Sigmoid colon (tissue), 7 donors: ENCODE measurements at regions of chr7 and their contacts with region 1.

Region 1: DNA sequence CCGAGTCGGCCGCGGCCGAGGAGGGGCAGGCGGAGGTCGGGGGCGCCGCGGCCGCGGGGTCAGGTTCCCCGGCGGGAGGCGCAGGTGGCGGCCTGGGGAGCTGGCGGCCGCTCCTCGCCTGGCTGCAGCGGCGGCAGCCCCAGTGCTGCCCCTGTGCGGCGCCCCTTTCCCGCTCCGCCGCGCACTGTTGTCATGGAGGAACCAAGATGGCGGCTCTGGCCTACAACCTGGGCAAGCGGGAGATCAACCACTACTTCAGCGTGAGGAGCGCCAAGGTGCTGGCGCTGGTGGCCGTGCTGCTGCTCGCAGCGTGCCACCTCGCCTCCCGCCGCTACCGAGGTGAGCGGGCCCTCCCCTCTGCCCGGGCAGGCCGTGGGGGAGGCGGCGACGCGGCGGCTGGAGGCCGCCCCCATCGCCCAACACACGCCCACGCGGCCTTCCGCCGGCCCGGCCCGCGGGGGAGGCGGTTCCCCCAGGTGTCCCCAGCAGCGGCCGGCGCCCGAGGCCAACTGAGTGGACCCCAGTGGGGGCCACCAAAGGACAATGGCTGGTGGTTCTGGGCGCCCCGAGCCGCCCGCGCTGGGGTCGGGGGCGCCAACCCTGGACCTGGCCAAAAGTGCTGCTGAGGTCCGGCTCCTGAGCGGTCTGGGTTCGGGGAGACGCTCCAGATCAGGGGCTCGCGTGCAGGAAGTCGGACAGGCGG is 421 bp downstream of the CASD1 start:
- DNase-seq: peak; percentile 77
- H3K4me3 ChIP-seq: peak overlapping the region; percentile 75 to 96 (median 82)
- H3K27ac ChIP-seq: peak overlapping the region; percentile 89 to 93 (median 91)
- H3K4me1 ChIP-seq: peaks cover 0 to 38% (median 21%) of the 10 kb centered on the region in 4 donors
- H3K27me3 ChIP-seq: no peaks in the 10 kb centered on the region
- CTCF ChIP-seq: no peak
- EP300 ChIP-seq: no peak
- POLR2A ChIP-seq: peak in 1 of 2 donors; percentile 18

Region 2: GRCh38 chr7:94266238-94266644 is 243.8 kb before region 1 on chr7:
- intact Hi-C with region 1: no loop called
- DNase-seq: no peak
- H3K4me3 ChIP-seq: no peak overlapping the region
- H3K27ac ChIP-seq: no peak overlapping the region
- H3K4me1 ChIP-seq: no peaks in the 10 kb centered on the region
- H3K27me3 ChIP-seq: no peaks in the 10 kb centered on the region
- CTCF ChIP-seq: no peak
- EP300 ChIP-seq: no peak
- POLR2A ChIP-seq: no peak

Region 3: GRCh38 chr7:94547126-94547525 is 37.1 kb after region 1 on chr7:
- intact Hi-C with region 1: loop called (anchors 5 kb)
- DNase-seq: no peak
- H3K4me3 ChIP-seq: no peak overlapping the region
- H3K27ac ChIP-seq: peak overlapping the region in 1 of 4 donors; percentile 32
- H3K4me1 ChIP-seq: peaks cover 0 to 24% (median 11%) of the 10 kb centered on the region in 4 donors
- H3K27me3 ChIP-seq: no peaks in the 10 kb centered on the region
- CTCF ChIP-seq: no peak
- EP300 ChIP-seq: no peak
- POLR2A ChIP-seq: no peak